CD8-positive, alpha-beta T cell (primary cell): ENCODE measurements at regions of chr17 and their contacts with region 1.

Region 1: DNA sequence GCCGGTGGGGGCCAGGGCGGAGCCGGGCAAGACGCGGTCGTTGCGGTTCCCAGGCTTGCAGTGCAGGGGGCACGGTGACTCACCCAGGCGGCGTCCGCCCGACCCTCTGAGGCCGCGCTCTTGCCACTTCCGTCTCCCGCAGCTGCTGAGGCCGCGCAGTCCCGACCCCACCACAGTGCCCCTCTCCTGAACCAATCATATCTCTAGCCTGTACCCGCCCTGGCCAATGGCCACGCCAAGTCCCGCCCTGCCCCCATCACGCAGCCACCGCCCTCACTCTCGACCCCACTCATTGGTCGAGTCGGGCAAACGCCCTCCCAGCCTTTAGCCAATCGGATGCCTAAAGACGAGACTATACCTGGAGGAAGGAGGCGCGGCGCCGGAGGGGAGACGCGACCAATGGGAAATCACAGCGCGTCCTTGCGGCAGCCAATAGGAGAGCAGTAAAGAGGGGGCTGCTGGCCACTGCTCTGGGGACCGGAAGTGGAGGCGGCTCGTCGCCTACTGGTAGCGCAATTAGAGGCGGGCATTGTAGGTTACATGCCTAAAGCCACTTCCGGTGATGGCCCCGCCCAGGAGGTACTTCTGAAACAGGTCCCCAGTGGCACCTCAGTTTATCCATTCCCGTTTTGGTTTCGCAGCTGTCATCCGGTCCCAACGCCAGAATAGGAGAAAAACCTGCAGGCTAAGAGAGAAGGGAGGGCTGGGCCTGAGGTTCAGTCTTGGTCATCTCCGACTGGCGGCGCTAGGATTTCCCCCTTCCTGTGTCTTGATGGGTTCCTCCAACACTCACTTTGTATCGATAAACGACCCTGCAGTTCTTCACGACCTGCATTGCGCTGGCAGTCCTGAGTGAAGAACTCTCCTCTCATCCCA is 3.5 kb upstream of the MTMR4 start:
- DNase-seq: peak; percentile 98 to 100 (median 99)
- ATAC-seq: peak; percentile 80
- H3K4me3 ChIP-seq: peak overlapping the region; percentile 77 to 94
- H3K4me3 Mint-ChIP-seq: peak overlapping the region; percentile 98
- H3K27ac ChIP-seq: peak overlapping the region; percentile 74 to 82
- H3K27ac Mint-ChIP-seq: peak overlapping the region; percentile 95
- H3K4me1 ChIP-seq: peaks cover 38% of the 10 kb centered on the region
- H3K4me1 Mint-ChIP-seq: peaks cover 42% of the 10 kb centered on the region
- H3K27me3 ChIP-seq: no peaks in the 10 kb centered on the region
- H3K27me3 Mint-ChIP-seq: no peaks in the 10 kb centered on the region
- CTCF ChIP-seq: no peak

Region 2: DNA sequence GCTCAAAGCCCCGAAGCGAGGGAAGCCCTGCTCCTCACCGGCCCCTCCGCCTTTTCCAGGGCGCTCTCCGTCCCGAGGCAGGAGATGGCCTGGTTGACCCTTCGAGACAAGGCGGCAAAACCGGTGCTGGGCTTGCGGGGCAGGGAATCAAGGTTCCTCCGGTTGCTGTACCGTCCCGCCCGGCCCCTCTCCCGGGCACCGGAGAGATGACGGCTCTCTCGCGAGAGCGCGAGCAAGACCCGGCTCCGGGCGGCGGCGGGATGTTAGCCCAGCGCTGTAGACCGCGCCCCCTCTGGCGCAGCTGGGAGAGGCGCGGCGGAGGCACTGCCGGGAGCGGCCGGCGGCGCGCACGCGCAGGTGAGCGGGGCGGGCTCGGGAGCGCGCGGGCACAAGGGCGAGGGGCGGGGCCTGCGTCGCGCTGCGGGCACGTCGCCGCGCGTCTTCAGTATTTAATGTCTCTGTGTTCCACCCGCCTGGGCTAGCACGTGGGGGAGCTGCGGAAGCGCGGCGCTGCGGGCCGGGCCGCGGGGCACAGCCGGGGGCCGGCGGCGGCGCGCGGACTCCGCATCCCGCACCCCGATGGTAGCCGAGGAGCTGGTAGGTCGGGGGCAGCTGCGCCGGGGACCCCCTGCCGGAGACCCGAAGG is 1433.0 kb before region 1 on chr17 and contains the start of gene AKAP1:
- CTCF ChIA-PET with region 1: no interaction called
- POLR2A ChIA-PET with region 1: no interaction called
- intact Hi-C with region 1: loop called (anchors 1 to 5 kb)
- DNase-seq: peak; percentile 89 to 98 (median 94)
- ATAC-seq: peak; percentile 86
- H3K4me3 ChIP-seq: peak within 1 kb of the TSS; percentile 88 to 95
- H3K4me3 Mint-ChIP-seq: peak within 1 kb of the TSS; percentile 91
- H3K27ac ChIP-seq: peak within 1 kb of the TSS; percentile 87 to 93
- H3K27ac Mint-ChIP-seq: peak within 1 kb of the TSS; percentile 93
- H3K4me1 ChIP-seq: peaks cover 12% of the 10 kb centered on the region
- H3K4me1 Mint-ChIP-seq: peaks cover 38% of the 10 kb centered on the region
- H3K27me3 ChIP-seq: no peaks in the 10 kb centered on the region
- H3K27me3 Mint-ChIP-seq: no peaks in the 10 kb centered on the region
- CTCF ChIP-seq: no peak
- total RNA-seq, gene AKAP1: 20.6 to 23.5 TPM

Region 3: GRCh38 chr17:58310516-58311428 is 207.2 kb before region 1 on chr17:
- CTCF ChIA-PET with region 1: no interaction called
- POLR2A ChIA-PET with region 1: no interaction called
- intact Hi-C with region 1: no loop called
- DNase-seq: peak in 1 of 9 experiments; percentile 3
- ATAC-seq: no peak
- H3K4me3 ChIP-seq: no peak overlapping the region
- H3K4me3 Mint-ChIP-seq: no peak overlapping the region
- H3K27ac ChIP-seq: no peak overlapping the region
- H3K27ac Mint-ChIP-seq: no peak overlapping the region
- H3K4me1 ChIP-seq: no peaks in the 10 kb centered on the region
- H3K4me1 Mint-ChIP-seq: no peaks in the 10 kb centered on the region
- H3K27me3 ChIP-seq: no peaks in the 10 kb centered on the region
- H3K27me3 Mint-ChIP-seq: no peaks in the 10 kb centered on the region
- CTCF ChIP-seq: no peak

Region 4: DNA sequence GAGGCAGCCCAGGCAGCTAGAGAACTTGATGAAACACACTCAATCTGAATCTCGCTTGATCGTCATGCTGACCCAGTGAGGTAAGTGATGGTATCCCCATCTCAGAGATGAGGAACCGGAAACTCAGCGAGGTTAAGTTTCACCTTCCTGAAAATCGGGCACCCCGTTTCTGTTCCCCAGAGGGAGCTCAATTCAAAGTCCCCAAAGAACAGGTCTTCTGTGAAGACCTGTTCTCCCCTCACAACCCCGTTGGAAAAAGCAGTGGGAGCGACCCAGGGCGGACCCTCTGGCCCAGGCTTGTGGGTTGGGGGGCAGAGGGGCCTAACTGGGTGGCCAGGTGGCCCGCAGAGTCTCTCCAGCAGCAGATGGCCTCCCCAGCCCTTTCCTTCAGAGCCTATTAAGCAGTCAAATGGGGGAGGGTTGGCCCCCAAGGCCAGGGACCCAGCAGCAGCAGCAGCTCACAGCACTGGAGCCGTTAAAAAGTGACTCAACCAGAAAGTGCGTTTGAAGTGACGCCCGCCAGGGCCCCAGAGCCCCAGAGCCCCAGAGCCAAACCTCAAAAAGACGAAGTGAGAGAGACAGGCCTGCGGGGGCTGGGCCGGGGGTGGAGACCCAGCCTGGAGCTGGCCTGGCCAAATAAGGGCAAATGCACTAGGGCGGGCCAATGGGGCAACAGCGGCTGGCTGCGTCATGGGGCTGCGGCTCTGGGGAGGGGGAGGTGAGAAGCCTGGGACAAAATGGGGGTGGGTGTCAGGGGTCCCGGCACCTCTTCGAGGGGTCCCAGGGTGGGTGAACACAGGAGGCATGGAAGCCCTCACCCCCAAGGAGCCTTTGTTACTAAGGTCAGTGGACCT is 180.1 kb before region 1 on chr17:
- CTCF ChIA-PET with region 1: no interaction called
- POLR2A ChIA-PET with region 1: no interaction called
- intact Hi-C with region 1: loop called in 1 of 2 experiments (anchors 1 kb)
- DNase-seq: peak; percentile 81 to 96 (median 92)
- ATAC-seq: peak; percentile 72
- H3K4me3 ChIP-seq: peak overlapping the region; percentile 90 to 99
- H3K4me3 Mint-ChIP-seq: peak overlapping the region; percentile 92
- H3K27ac ChIP-seq: peak overlapping the region; percentile 92 to 99
- H3K27ac Mint-ChIP-seq: peak overlapping the region; percentile 97
- H3K4me1 ChIP-seq: peaks cover 72% of the 10 kb centered on the region
- H3K4me1 Mint-ChIP-seq: peaks cover 83% of the 10 kb centered on the region
- H3K27me3 ChIP-seq: no peaks in the 10 kb centered on the region
- H3K27me3 Mint-ChIP-seq: no peaks in the 10 kb centered on the region
- CTCF ChIP-seq: no peak

Region 5: GRCh38 chr17:58504826-58505521 is 13.0 kb before region 1 on chr17:
- CTCF ChIA-PET with region 1: interaction called, 10 read pairs
- POLR2A ChIA-PET with region 1: interaction called, 3 read pairs
- intact Hi-C with region 1: no loop called
- DNase-seq: peak in 1 of 9 experiments; percentile 14
- ATAC-seq: no peak
- H3K4me3 ChIP-seq: no peak overlapping the region
- H3K4me3 Mint-ChIP-seq: no peak overlapping the region
- H3K27ac ChIP-seq: no peak overlapping the region
- H3K27ac Mint-ChIP-seq: no peak overlapping the region
- H3K4me1 ChIP-seq: no peaks in the 10 kb centered on the region
- H3K4me1 Mint-ChIP-seq: peaks cover 3% of the 10 kb centered on the region
- H3K27me3 ChIP-seq: no peaks in the 10 kb centered on the region
- H3K27me3 Mint-ChIP-seq: no peaks in the 10 kb centered on the region
- CTCF ChIP-seq: no peak

Region 6: GRCh38 chr17:58658804-58659713 is 141.1 kb after region 1 on chr17:
- CTCF ChIA-PET with region 1: no interaction called
- POLR2A ChIA-PET with region 1: interaction called, 4 read pairs
- intact Hi-C with region 1: loop called (anchors 1 kb)
- DNase-seq: peak; percentile 56 to 95 (median 80)
- ATAC-seq: peak; percentile 83
- H3K4me3 ChIP-seq: peak overlapping the region; percentile 40 to 41
- H3K4me3 Mint-ChIP-seq: peak overlapping the region; percentile 77
- H3K27ac ChIP-seq: peak overlapping the region; percentile 91 to 96
- H3K27ac Mint-ChIP-seq: peak overlapping the region; percentile 100
- H3K4me1 ChIP-seq: no peaks in the 10 kb centered on the region
- H3K4me1 Mint-ChIP-seq: peaks cover 17% of the 10 kb centered on the region
- H3K27me3 ChIP-seq: no peaks in the 10 kb centered on the region
- H3K27me3 Mint-ChIP-seq: no peaks in the 10 kb centered on the region
- CTCF ChIP-seq: no peak

Region 7: DNA sequence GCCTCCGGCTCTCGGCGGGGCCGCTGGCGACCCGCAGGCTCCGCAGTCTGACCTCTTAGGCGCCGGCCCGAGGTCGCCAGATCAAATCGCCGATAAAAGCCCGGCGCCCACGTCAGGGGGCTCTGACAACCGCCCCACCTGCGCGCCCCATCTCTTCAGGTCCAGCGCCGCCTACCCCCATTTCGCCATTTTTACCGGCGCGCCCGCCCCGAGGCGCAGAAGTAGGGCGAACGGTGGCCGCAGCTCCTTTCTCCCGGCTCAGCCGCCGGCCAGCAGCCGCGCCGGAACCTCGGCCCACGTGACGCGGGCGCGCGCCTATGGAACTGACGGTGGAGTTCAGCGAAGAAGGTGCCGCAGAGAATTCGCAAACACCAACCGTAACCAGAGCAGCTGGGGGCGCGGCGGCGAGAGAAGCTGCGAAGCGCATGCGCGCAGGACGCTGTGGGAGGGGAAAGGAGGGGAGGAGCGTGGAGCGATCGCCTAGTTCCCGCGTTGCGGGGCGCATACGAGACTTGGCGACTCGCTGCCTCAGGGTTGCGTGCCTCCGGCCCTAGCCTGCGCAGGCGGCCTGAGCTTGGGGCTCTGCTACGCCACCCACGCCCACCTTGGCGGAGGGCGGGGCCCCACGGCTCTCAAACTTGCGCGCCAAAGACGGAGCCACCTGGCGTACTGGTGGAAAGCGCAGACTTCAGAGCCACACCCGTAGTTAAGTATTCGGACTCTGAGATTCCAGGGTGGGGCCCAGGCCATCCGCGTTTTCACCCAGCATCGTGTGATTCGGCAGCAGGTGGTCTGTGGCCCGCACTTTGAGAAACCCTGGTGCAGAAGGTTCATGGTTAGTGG is 588.7 kb after region 1 on chr17 and contains the start of gene TRIM37:
- CTCF ChIA-PET with region 1: no interaction called
- POLR2A ChIA-PET with region 1: interaction called, 4 read pairs
- intact Hi-C with region 1: loop called in 1 of 2 experiments (anchors 2 kb)
- DNase-seq: peak; percentile 97 to 100 (median 98)
- ATAC-seq: peak; percentile 96
- H3K4me3 ChIP-seq: peak within 1 kb of the TSS; percentile 89 to 93
- H3K4me3 Mint-ChIP-seq: peak within 1 kb of the TSS; percentile 92
- H3K27ac ChIP-seq: peak within 1 kb of the TSS; percentile 87 to 88
- H3K27ac Mint-ChIP-seq: peak within 1 kb of the TSS; percentile 91
- H3K4me1 ChIP-seq: peaks cover 26% of the 10 kb centered on the region
- H3K4me1 Mint-ChIP-seq: peaks cover 38% of the 10 kb centered on the region
- H3K27me3 ChIP-seq: no peaks in the 10 kb centered on the region
- H3K27me3 Mint-ChIP-seq: no peaks in the 10 kb centered on the region
- CTCF ChIP-seq: no peak
- total RNA-seq, gene TRIM37: 17.7 to 20.9 TPM

Region 8: DNA sequence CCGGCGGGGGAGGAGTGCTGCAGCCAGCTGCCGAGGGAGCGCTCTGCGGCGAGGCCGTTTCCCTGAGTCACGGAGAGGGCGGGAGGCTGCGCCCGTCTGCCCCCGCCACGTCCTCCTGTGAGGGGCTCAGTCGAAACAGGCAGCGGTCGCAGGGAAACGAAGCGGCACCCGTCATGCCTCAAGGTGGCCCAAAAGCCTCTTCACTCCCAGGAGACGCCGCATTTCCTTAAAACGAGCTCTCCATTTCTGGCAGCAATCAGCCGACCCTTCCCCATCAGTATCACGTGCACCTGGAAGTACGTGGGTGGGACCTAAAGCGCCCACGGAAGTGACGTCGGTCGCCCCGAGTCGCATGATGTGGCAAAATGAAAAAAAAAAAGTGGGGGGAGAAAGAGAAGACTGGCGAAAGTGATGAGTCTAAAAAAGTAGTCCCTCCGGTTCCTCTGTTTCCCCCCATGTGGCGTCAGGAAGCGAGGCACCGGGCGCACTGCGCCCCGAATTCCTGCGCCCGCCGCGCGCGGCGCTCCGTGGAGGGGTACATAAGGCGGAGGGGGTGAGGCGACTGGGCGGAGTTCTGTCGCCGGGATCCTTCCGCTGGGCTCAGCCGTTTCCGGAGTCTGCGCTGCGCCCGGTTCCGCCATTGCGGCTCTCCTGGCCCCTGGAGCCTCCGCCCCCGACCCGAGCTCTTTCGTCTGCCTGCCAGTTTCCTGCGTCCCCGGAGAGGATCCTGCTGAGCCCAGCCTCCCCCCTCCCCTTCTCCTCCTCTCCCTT is 1101.5 kb after region 1 on chr17 and contains the start of gene CLTC:
- CTCF ChIA-PET with region 1: no interaction called
- POLR2A ChIA-PET with region 1: no interaction called
- intact Hi-C with region 1: loop called (anchors 2 to 10 kb)
- DNase-seq: peak; percentile 83 to 98 (median 90)
- ATAC-seq: peak; percentile 82
- H3K4me3 ChIP-seq: peak within 1 kb of the TSS; percentile 98 to 99
- H3K4me3 Mint-ChIP-seq: peak within 1 kb of the TSS; percentile 96
- H3K27ac ChIP-seq: peak within 1 kb of the TSS; percentile 91 to 99
- H3K27ac Mint-ChIP-seq: peak within 1 kb of the TSS; percentile 98
- H3K4me1 ChIP-seq: peaks cover 37% of the 10 kb centered on the region
- H3K4me1 Mint-ChIP-seq: peaks cover 48% of the 10 kb centered on the region
- H3K27me3 ChIP-seq: no peaks in the 10 kb centered on the region
- H3K27me3 Mint-ChIP-seq: no peaks in the 10 kb centered on the region
- CTCF ChIP-seq: no peak
- total RNA-seq, gene CLTC: 73.4 to 86.0 TPM